ENCODE measurements at regions of chr5 and their contacts with region 1.

Region 1: GRCh38 chr5:69042915-69043658 is 50.7 kb upstream of the SLC30A5 start:
- DNase-seq: peak in 6 of 10 donors; percentile 33 to 84 (median 64)

Region 2: DNA sequence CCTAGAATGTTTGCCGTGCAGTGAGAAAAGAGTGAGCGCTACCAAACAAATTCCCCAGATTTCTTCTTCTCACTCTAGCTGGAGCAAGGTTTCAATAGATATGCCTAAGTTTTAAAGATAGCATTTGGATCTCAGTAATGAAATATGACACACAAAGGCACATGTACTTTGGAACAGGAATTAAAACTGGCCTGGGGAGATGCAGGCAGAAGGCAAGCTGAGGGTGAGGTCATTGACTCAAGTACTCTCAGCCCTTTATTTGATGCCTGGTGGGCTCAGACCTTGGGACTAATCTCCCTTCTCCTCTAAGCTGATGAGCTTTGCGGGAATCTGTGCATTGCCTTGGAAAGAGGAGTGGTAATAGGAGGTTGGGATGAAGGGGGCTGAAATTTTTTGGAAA is 272.5 kb before region 1 on chr5:
- intact Hi-C with region 1: no loop called
- DNase-seq: no peak

Region 3: DNA sequence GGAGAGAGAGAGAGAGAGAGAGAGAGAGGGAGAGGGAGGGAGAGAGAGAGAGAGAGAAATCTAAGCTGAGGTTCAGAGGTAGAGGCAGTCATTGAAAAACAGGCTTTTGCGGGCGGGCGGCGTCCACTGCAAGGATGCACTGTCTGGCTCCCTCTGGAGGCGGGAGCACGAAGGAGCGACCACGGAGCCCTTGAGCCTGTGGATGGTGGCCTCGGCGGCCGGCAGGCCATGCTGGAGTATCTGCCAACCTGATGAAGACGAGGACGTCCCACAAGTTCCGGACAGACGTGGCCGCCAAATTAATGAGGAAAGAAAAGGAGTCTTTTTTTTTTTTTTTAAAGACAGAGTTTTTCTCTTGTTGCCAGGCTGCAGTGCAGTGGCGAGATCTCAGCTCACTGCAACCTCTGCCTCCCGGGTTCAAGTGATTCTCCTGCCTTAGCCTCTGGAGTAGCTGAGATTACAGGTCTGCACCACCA is 291.7 kb after region 1 on chr5:
- intact Hi-C with region 1: loop called (anchors 2 kb)
- DNase-seq: peak; percentile 69 to 97 (median 86)